Uterus (tissue), 4 donors: ENCODE measurements at regions of chr17 and their contacts with region 1.

Region 1: GRCh38 chr17:17812211-17813057 is 24.4 kb downstream of the SREBF1 start:
- DNase-seq: peak; percentile 78 to 88
- H3K4me3 ChIP-seq: no peak overlapping the region
- H3K27ac ChIP-seq: peak overlapping the region; percentile 48 to 78
- H3K4me1 ChIP-seq: peaks cover 6 to 21% of the 10 kb centered on the region in 2 donors
- H3K27me3 ChIP-seq: no peaks in the 10 kb centered on the region
- CTCF ChIP-seq: peak; percentile 99 to 100 (median 100)
- POLR2A ChIP-seq: no peak

Region 2: GRCh38 chr17:17859909-17860765 is 47.7 kb after region 1 on chr17:
- intact Hi-C with region 1: loop called (anchors 2 kb)
- DNase-seq: peak; percentile 64 to 69
- H3K4me3 ChIP-seq: no peak overlapping the region
- H3K27ac ChIP-seq: no peak overlapping the region
- H3K4me1 ChIP-seq: no peaks in the 10 kb centered on the region
- H3K27me3 ChIP-seq: no peaks in the 10 kb centered on the region
- CTCF ChIP-seq: peak; percentile 93 to 97 (median 96)
- POLR2A ChIP-seq: no peak